ENCODE measurements at regions of chr20 and their contacts with region 1.

Region 1: GRCh38 chr20:48098067-48098466 is 312.8 kb upstream of the SULF2 start:
- DNase-seq: no peak
- ATAC-seq: peak; percentile 51; the same call in 1 of the 2 replicates
- H3K4me3 ChIP-seq: no peak overlapping the region
- H3K27ac ChIP-seq: no peak overlapping the region
- H3K4me1 ChIP-seq: no peaks in the 10 kb centered on the region
- H3K27me3 ChIP-seq: peaks cover 8% of the 10 kb centered on the region
- CTCF ChIP-seq: no peak

Region 2: GRCh38 chr20:48025031-48025515 is 73.0 kb before region 1 on chr20:
- CTCF ChIA-PET with region 1: no interaction called
- POLR2A ChIA-PET with region 1: no interaction called
- in situ Hi-C with region 1: no loop called
- intact Hi-C with region 1: no loop called
- DNase-seq: no peak
- ATAC-seq: peak; percentile 78
- H3K4me3 ChIP-seq: no peak overlapping the region
- H3K27ac ChIP-seq: no peak overlapping the region
- H3K4me1 ChIP-seq: no peaks in the 10 kb centered on the region
- H3K27me3 ChIP-seq: no peaks in the 10 kb centered on the region
- CTCF ChIP-seq: no peak

Region 3: GRCh38 chr20:48109881-48110460 is 11.9 kb after region 1 on chr20:
- CTCF ChIA-PET with region 1: no interaction called
- POLR2A ChIA-PET with region 1: interaction called, 11 read pairs
- in situ Hi-C with region 1: no loop called
- intact Hi-C with region 1: no loop called
- DNase-seq: no peak
- ATAC-seq: no peak
- H3K4me3 ChIP-seq: no peak overlapping the region
- H3K27ac ChIP-seq: no peak overlapping the region
- H3K4me1 ChIP-seq: no peaks in the 10 kb centered on the region
- H3K27me3 ChIP-seq: peaks cover 10% of the 10 kb centered on the region
- CTCF ChIP-seq: no peak

Measured in Panc1 (cell line).